ENCODE measurements at regions of chr1 and their contacts with region 1.

Region 1: DNA sequence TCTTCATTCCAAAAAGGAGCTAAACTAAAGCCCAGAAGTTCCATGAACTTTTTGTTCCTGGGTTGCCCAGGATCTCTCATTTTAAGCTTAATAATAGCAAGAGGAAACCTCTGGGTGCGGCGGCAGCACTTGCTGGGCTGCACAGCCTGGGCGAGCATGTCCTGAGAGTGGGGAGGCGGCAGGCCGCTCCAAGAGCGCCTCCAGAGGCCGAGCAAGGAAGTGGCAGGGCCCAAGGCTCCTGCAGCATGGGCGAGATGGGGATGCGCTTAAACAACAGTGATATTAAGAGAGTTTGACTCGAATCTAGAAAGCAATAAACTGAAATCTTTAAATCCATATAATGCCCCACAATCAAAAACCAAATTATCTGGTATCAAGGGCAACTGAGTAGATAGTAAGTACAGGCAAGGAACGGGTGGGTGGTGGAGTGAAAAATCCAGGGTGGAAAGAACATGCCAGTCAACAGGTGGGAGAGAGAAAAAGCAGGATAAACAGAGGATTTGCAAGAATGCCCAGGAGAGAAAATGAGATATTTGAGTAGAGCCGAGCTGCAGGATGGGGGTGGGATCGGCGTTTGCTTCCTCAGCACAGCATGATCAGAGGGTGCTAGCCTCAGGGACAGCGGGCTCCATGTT is 14.1 kb upstream of the TNR start:
- ATAC-seq: peak; percentile 61 to 99 (median 76)
- H3K4me3 ChIP-seq: no peak overlapping the region
- H3K27ac ChIP-seq: no peak overlapping the region
- H3K4me1 ChIP-seq: no peaks in the 10 kb centered on the region

Region 2: GRCh38 chr1:176073524-176074157 is 316.1 kb after region 1 on chr1:
- in situ Hi-C with region 1: loop called in 1 of 9 experiments (anchors 25 kb)
- ATAC-seq: peak; percentile 66 to 89 (median 79)
- H3K4me3 ChIP-seq: no peak overlapping the region
- H3K27ac ChIP-seq: no peak overlapping the region
- H3K4me1 ChIP-seq: no peaks in the 10 kb centered on the region